Activated CD4-positive, alpha-beta memory T cell treated with anti-CD3 and anti-CD28 coated beads for 36 hours (primary cell): ENCODE measurements at regions of chr4 and their contacts with region 1.

Region 1: DNA sequence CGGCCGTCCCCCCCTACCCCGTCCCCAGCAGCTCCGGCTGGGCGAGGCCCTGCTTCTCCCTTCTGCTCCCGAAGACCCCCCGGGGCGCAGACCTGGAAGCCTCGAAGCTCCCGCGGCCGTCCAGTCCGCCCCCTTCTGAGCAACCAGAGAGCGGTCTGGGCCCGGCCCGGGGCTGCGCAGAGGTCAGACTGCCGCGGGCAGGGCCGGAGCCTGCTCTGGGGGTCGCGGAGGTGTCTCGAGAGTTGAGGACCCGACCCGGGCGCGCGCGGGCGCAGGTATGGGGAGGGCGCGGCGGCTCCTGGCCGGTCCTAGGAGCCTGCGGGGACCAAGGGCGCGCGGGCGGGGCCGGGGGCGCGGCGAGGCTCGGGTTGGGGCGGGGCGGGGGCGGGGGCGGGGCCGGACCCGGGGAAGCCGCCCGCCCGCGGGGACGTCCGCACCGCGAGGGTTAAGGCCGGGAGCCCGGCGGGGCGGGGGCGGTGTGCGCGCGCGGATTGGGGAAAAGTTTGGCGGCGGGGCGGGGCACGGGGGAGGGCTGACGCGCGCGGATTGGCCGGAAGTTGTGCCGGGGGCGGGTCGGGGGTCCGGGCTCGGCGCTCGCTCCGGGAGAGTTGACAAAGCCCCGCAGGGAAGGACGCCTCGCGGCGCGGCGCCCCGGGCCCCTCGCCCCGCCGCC is at the start of gene FGFRL1:
- DNase-seq: peak; percentile 95
- H3K4me3 Mint-ChIP-seq: peak within 1 kb of the TSS; percentile 69
- H3K27ac Mint-ChIP-seq: peak within 1 kb of the TSS; percentile 76
- H3K4me1 Mint-ChIP-seq: peaks cover 10% of the 10 kb centered on the region
- H3K27me3 Mint-ChIP-seq: peaks cover 27% of the 10 kb centered on the region
- total RNA-seq, gene FGFRL1: 12.2 to 15.1 TPM

Region 2: DNA sequence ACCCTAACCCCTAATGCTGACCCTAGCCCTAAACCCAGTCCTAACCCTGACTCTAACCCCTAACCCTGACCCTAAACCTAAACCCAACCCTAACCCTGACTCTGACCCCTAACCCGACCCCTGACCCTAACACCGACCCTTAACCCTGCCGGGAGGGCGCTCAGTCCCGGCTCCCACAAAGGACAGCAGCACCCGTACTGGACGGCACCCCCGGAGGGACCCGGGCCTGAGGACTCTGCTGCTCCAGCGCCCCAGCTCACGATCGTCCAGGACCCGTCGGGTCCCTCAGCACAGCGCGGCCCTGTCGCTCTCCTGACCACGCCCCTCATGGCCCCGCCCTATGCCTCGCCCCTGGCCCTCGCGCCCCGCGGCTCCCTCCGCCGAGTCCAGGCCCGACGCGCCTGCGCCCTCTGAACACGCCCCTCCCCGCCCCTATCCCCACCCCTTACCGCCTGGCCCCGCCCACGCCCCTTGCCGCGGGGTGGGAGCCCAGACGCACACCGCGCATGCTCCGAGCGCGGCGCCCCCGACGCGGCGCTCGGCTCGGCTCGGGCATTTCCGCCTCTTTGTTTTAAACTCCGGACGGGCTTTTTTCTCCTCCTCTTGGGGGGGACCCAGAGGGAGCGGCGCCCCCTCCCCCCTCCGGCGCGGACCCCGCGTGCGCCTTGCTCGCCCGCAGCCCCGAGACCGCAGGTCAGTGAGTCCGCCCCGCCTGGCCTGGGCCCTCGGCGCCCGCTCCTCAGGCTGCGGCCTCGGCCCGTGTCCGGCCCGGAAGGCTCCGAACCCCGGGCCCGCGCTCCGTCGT is 305.7 kb before region 1 on chr4 and contains the start of gene PCGF3:
- CTCF ChIA-PET with region 1: no interaction called
- POLR2A ChIA-PET with region 1: no interaction called
- intact Hi-C with region 1: loop called (anchors 1 kb)
- DNase-seq: peak; percentile 98
- H3K4me3 Mint-ChIP-seq: peak within 1 kb of the TSS; percentile 75
- H3K27ac Mint-ChIP-seq: peak within 1 kb of the TSS; percentile 23
- H3K4me1 Mint-ChIP-seq: peaks cover 22% of the 10 kb centered on the region
- H3K27me3 Mint-ChIP-seq: no peaks in the 10 kb centered on the region
- total RNA-seq, gene PCGF3: 27.8 to 29.3 TPM

Region 3: DNA sequence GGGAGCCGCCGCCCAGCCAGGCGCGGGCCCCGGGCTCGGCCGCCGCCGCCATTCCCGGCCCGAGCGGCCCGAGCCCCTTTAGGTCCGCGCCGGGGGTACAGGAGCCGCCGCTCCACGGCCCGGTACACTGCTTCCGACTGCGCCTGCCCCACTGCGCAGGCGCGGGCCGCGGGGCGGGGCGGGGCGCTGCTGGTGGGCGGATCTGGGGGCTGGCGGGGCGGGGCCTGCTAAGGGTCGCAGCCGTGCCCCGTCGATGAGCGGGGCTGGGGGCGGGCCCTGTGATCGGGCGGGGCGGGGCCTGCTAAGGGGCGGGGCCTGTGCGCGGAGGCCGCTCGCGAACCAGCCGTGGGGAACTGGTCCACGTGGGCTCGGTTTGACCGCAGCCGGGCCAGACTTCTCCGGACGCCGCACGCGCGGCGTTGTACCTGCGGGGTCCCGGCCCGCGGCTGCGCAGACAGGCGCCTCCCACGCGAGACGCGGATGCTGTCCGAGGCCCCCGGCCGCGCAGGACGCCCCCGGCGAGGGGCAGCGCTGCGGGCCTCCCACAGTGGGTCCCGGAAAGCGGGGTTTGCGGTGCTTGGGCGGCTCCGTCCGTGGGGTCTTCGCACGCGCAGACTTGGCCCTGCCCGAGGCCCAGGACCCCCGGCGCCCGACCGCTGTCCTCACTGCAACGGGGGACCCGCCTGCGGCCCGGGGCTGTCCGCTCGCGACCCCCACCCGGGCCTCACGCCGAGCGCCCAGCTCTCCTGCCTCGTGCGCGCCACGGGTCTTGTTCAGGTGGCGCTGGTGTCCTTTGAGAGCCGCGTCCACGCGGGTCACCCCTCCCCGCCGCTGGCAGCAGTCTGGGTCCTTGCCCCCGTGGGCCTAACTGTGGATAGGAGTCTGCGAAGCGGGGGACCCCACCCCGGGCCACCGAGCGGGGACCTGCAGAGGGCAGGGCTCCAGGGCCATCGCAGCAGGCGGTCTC is 37.4 kb before region 1 on chr4 and contains the start of gene DGKQ:
- CTCF ChIA-PET with region 1: no interaction called
- POLR2A ChIA-PET with region 1: no interaction called
- intact Hi-C with region 1: loop called (anchors 1 kb)
- DNase-seq: peak; percentile 92
- H3K4me3 Mint-ChIP-seq: peak within 1 kb of the TSS; percentile 55
- H3K27ac Mint-ChIP-seq: no peak within 1 kb of the TSS
- H3K4me1 Mint-ChIP-seq: peaks cover 8% of the 10 kb centered on the region
- H3K27me3 Mint-ChIP-seq: no peaks in the 10 kb centered on the region
- total RNA-seq, gene DGKQ: 11.1 to 11.4 TPM

Region 4: DNA sequence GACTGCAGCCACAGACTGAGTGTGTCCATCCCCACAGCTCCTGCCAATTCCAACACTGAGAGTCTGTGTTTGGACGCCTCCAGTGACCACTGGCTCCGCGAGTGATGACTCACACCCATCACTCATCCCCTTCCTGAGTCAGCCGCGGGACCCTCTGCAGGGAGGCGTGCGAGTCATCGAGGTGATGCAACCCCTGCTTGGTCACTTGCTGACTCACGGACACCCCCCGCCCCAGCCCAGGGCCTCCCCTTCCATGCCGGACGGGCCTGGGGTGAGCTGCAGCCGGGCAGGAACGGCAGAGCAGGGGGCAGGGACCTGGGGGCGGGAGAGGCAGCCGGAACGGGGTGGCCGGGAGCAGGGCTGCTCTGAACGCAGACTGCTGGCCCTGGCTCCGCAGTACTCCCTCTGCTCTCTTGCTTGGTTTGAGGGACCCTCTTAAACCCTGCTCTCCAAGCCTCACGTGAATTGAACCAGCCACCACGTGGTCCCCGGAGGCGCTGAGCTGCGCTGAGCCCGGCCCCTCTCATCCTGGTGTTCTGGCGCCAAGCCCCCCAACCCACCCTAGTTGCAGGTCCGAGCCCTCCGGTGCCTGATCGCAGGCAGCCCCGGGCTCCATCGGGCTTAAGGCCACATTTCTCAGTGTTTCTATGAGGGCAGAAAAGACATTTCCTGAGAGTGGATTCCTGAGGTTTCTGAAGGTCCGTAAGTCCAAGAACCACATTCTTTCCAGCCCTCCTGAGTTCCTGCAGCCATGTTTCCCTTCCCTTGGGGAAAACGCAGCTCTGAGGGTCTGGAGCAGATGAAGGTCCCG is 32.7 kb after region 1 on chr4:
- CTCF ChIA-PET with region 1: no interaction called
- POLR2A ChIA-PET with region 1: no interaction called
- intact Hi-C with region 1: no loop called
- DNase-seq: peak; percentile 65
- H3K4me3 Mint-ChIP-seq: no peak overlapping the region
- H3K27ac Mint-ChIP-seq: no peak overlapping the region
- H3K4me1 Mint-ChIP-seq: peaks cover 5% of the 10 kb centered on the region
- H3K27me3 Mint-ChIP-seq: peaks cover 27% of the 10 kb centered on the region

Region 5: GRCh38 chr4:1249148-1249730 is 238.1 kb after region 1 on chr4:
- CTCF ChIA-PET with region 1: no interaction called
- POLR2A ChIA-PET with region 1: interaction called, 3 read pairs
- intact Hi-C with region 1: loop called (anchors 2 kb)
- DNase-seq: peak; percentile 85
- H3K4me3 Mint-ChIP-seq: peak overlapping the region; percentile 85
- H3K27ac Mint-ChIP-seq: peak overlapping the region; percentile 96
- H3K4me1 Mint-ChIP-seq: peaks cover 69% of the 10 kb centered on the region
- H3K27me3 Mint-ChIP-seq: no peaks in the 10 kb centered on the region